ENCODE measurements at regions of chr5 and their contacts with region 1.

Region 1: DNA sequence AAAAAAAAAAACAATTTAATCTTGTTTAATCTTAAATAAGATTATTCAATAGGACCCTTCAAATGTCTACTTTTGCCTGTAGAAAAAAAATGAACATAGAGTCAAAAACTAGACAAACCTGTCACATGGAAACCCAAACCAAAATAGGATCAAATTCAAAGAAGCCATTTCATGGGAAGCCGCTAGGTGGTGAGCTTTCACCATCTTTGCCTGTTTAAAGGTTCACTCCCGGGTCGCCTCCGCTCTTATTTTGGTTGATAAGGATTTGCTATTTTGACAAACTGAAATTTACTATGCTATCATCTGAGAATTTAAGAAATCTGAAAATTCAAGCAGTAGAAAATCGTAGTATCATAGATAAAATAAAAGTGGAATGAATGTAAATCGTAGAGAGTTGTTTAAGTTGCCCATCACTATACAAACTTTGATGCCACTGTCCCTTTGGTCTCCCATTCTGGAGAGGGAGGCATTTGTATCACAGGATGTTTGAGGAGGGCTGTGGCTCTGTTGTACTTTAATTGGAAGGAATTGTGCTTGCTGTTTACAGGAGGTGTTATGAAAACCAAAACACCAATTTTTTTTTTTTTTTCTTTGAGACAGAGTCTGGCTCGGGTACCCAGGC is 43.5 kb upstream of the DNAH5 start:
- DNase-seq: peak; percentile 64
- H3K4me3 ChIP-seq: no peak overlapping the region
- H3K27ac ChIP-seq: no peak overlapping the region
- H3K4me1 ChIP-seq: peaks cover 16% of the 10 kb centered on the region
- H3K27me3 ChIP-seq: no peaks in the 10 kb centered on the region
- CTCF ChIP-seq: peak; percentile 69 to 84
- POLR2A ChIP-seq: no peak

Region 2: GRCh38 chr5:13878357-13878756 is 109.6 kb before region 1 on chr5:
- CTCF ChIA-PET with region 1: no interaction called
- POLR2A ChIA-PET with region 1: no interaction called
- dilution Hi-C with region 1: no loop called
- intact Hi-C with region 1: no loop called
- DNase-seq: no peak
- H3K4me3 ChIP-seq: no peak overlapping the region
- H3K27ac ChIP-seq: no peak overlapping the region
- H3K4me1 ChIP-seq: no peaks in the 10 kb centered on the region
- H3K27me3 ChIP-seq: no peaks in the 10 kb centered on the region
- CTCF ChIP-seq: no peak
- POLR2A ChIP-seq: no peak

Region 3: GRCh38 chr5:14286574-14287421 is 298.8 kb after region 1 on chr5:
- CTCF ChIA-PET with region 1: interaction called, 3 read pairs
- POLR2A ChIA-PET with region 1: no interaction called
- dilution Hi-C with region 1: loop called (anchors 25 kb)
- intact Hi-C with region 1: no loop called
- DNase-seq: no peak
- H3K4me3 ChIP-seq: no peak overlapping the region
- H3K27ac ChIP-seq: no peak overlapping the region
- H3K4me1 ChIP-seq: no peaks in the 10 kb centered on the region
- H3K27me3 ChIP-seq: no peaks in the 10 kb centered on the region
- CTCF ChIP-seq: no peak
- POLR2A ChIP-seq: no peak

Region 4: GRCh38 chr5:14405267-14405666 is 417.3 kb after region 1 on chr5:
- CTCF ChIA-PET with region 1: no interaction called
- POLR2A ChIA-PET with region 1: no interaction called
- dilution Hi-C with region 1: no loop called
- intact Hi-C with region 1: loop called (anchors 5 kb)
- DNase-seq: no peak
- H3K4me3 ChIP-seq: no peak overlapping the region
- H3K27ac ChIP-seq: peak overlapping the region; percentile 9
- H3K4me1 ChIP-seq: peaks cover 41% of the 10 kb centered on the region
- H3K27me3 ChIP-seq: no peaks in the 10 kb centered on the region
- CTCF ChIP-seq: peak in 1 of 2 donors; percentile 32
- POLR2A ChIP-seq: no peak

Region 5: GRCh38 chr5:15013654-15014463 is 1025.9 kb after region 1 on chr5:
- CTCF ChIA-PET with region 1: no interaction called
- POLR2A ChIA-PET with region 1: no interaction called
- dilution Hi-C with region 1: no loop called
- intact Hi-C with region 1: loop called (anchors 10 kb)
- DNase-seq: peak; percentile 74
- H3K4me3 ChIP-seq: no peak overlapping the region
- H3K27ac ChIP-seq: no peak overlapping the region
- H3K4me1 ChIP-seq: peaks cover 11% of the 10 kb centered on the region
- H3K27me3 ChIP-seq: peaks cover 0 to 5% of the 10 kb centered on the region in 2 experiments
- CTCF ChIP-seq: peak; percentile 38 to 39
- POLR2A ChIP-seq: no peak